Adrenal gland (tissue), 19 donors: ENCODE measurements at regions of chr11 and their contacts with region 1.

Region 1: GRCh38 chr11:120511116-120511819 is at the start of gene GRIK4:
- DNase-seq: peak; percentile 77 to 92 (median 88)
- H3K4me3 ChIP-seq: peak within 1 kb of the TSS in 2 of 4 donors; percentile 34 to 70
- H3K27ac ChIP-seq: peak within 1 kb of the TSS in 1 of 5 donors; percentile 63
- H3K4me1 ChIP-seq: peaks cover 0 to 5% of the 10 kb centered on the region in 2 donors
- H3K27me3 ChIP-seq: no peaks in the 10 kb centered on the region
- CTCF ChIP-seq: peak; percentile 90 to 97 (median 96)
- POLR2A ChIP-seq: no peak
- total RNA-seq, gene GRIK4: 0.33 to 4.8 (median 3.9) TPM

Region 2: GRCh38 chr11:120682866-120683265 is 171.6 kb after region 1 on chr11:
- intact Hi-C with region 1: loop called (anchors 2 to 5 kb)
- DNase-seq: no peak
- H3K4me3 ChIP-seq: no peak overlapping the region
- H3K27ac ChIP-seq: no peak overlapping the region
- H3K4me1 ChIP-seq: no peaks in the 10 kb centered on the region
- H3K27me3 ChIP-seq: no peaks in the 10 kb centered on the region
- CTCF ChIP-seq: no peak
- POLR2A ChIP-seq: no peak

Region 3: GRCh38 chr11:120688163-120688562 is 176.9 kb after region 1 on chr11:
- intact Hi-C with region 1: loop called (anchors 2 to 5 kb)
- DNase-seq: no peak
- H3K4me3 ChIP-seq: no peak overlapping the region
- H3K27ac ChIP-seq: no peak overlapping the region
- H3K4me1 ChIP-seq: no peaks in the 10 kb centered on the region
- H3K27me3 ChIP-seq: no peaks in the 10 kb centered on the region
- CTCF ChIP-seq: no peak
- POLR2A ChIP-seq: no peak

Region 4: DNA sequence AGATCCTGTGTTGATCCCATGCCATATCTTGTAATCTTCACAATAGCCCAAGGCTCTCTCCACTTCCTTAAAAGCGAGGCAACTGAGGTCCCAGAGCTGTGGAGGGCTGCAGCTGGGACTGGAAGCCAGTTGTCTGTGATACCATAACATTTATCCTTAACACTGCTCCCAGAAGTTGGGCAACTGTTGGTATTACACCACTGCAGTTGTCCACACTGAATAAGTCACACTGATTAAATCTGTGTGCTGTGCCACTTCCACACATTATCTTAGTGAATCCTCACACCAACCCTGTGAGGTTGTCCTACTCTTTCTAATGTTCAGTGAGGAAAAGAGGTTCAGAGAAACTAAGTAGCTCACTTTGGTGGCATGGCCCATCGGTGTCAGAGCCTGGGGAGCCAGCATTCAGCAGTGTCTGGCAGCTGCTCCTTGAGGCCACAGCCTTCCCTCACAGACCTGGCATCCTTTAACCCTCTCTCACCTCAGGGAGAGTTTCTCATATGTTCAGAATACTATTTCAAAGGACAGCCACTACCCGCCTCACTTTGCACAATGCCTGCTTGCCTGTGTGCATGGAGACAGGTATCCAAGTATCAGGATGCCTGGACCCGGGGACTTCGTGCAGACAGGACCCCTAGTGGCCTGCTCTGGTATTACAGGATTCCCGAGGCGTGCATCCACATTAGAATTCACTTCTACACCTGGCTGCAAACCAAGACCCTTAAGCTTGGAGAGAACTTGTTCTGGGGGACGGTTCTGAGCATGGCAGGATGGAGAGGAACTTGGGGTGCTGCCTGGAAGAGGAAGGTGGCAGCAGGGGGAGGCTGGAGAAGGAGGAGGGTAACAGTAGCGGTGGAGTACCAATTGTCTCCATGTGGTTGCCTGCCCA is 290.8 kb after region 1 on chr11:
- intact Hi-C with region 1: loop called (anchors 5 to 10 kb)
- DNase-seq: peak; percentile 54 to 90 (median 68)
- H3K4me3 ChIP-seq: no peak overlapping the region
- H3K27ac ChIP-seq: no peak overlapping the region
- H3K4me1 ChIP-seq: no peaks in the 10 kb centered on the region
- H3K27me3 ChIP-seq: no peaks in the 10 kb centered on the region
- CTCF ChIP-seq: peak; percentile 65 to 93 (median 84)
- POLR2A ChIP-seq: no peak

Region 5: GRCh38 chr11:120952461-120953434 is 441.5 kb after region 1 on chr11:
- intact Hi-C with region 1: loop called (anchors 2 to 5 kb)
- DNase-seq: peak; percentile 81 to 90 (median 82)
- H3K4me3 ChIP-seq: peak overlapping the region in 1 of 4 donors; percentile 16
- H3K27ac ChIP-seq: no peak overlapping the region
- H3K4me1 ChIP-seq: peaks cover 0 to 4% of the 10 kb centered on the region in 2 donors
- H3K27me3 ChIP-seq: no peaks in the 10 kb centered on the region
- CTCF ChIP-seq: peak; percentile 59 to 84 (median 77)
- POLR2A ChIP-seq: no peak

Region 6: DNA sequence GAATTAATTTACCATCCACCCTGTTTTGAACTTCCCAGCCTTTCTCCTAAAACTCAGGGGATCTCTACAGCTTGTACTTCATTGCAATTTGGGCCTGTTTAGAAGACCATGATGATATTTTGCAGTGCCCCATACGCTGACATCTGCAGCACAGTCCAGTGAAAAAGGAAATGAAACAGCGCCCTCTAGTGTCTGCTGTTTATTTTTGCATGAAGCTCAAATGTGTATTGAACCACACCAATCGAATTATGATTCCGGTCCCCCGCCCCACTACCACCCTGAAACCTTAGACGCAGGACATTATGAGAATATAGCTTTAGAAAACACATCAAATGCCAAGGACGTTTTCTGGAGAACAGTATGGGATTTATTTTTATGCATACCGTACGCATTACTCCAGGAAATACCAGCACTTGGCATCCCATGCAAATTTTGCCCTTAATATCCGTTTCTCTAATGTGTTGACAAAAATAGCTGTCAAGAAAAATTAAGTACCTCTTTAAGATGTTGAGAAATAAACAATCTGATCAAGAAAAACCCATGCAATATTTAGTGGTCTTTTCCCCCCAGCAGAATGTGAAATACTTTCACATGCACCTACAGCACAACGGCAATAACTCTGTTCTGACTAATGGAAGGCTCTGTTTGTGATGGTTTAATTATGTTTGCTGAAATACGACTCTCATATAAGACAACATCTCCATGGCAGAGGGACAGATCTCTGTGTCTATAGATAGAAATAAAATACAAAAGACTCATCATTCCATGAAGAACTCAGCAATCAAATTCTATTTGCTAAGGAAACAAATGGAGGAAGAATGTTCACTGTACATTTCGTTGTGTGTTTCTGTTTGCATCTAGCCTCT is 683.7 kb after region 1 on chr11:
- intact Hi-C with region 1: loop called in 1 of 2 experiments (anchors 10 kb)
- DNase-seq: peak; percentile 25 to 76 (median 56)
- H3K4me3 ChIP-seq: no peak overlapping the region
- H3K27ac ChIP-seq: no peak overlapping the region
- H3K4me1 ChIP-seq: peaks cover 0 to 6% of the 10 kb centered on the region in 2 donors
- H3K27me3 ChIP-seq: no peaks in the 10 kb centered on the region
- CTCF ChIP-seq: peak; percentile 61 to 90 (median 78)
- POLR2A ChIP-seq: no peak